Mammary epithelial cell (primary cell): ENCODE measurements at regions of chr7 and their contacts with region 1.

Region 1: DNA sequence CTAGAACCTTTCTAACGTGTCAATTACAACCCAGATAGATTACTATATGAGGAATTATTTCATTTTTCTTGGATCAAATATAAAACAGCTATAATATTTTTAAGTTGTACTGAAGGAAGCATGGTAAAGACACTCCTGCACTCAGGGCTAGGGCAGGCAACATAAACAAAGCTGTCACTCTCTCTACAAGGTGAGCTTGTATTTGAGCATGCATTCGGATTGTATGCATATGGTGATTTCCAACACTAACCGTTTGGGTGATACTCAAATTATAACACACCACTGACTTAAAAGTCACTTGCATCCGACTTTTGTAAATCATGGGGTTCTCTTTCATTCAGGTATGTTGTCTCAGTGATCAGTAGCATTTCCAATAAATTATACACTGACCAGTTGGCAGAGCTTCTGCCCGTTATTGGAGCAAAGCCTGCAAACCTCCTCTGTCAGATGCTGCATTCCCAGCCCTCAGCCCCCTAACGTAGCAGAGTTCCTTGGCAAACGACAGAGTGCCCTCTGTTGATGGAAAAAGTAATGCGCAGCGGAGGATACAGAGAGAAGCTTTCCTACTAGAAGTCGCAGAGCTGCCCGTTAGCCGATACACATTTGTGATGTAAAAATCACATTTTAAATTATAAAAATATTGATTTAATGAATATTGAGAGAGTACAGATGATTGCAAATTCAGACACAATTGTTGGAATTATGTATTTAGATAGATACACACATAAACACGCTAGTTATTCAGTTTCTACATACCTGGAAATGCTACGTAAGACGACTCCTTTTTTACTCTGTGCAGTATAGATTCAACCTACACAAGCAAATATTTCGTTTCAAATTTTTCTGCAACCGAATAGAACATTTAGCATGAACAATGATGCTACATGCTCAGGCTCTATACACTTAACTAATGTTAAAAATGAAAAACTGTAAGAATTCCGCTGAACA is 173.9 kb upstream of the SP4 start:
- DNase-seq: peak; percentile 52
- H3K4me3 ChIP-seq: no peak overlapping the region
- H3K27ac ChIP-seq: no peak overlapping the region
- H3K4me1 ChIP-seq: peaks cover 3% of the 10 kb centered on the region
- H3K27me3 ChIP-seq: no peaks in the 10 kb centered on the region
- CTCF ChIP-seq: peak; percentile 83 to 86

Region 2: DNA sequence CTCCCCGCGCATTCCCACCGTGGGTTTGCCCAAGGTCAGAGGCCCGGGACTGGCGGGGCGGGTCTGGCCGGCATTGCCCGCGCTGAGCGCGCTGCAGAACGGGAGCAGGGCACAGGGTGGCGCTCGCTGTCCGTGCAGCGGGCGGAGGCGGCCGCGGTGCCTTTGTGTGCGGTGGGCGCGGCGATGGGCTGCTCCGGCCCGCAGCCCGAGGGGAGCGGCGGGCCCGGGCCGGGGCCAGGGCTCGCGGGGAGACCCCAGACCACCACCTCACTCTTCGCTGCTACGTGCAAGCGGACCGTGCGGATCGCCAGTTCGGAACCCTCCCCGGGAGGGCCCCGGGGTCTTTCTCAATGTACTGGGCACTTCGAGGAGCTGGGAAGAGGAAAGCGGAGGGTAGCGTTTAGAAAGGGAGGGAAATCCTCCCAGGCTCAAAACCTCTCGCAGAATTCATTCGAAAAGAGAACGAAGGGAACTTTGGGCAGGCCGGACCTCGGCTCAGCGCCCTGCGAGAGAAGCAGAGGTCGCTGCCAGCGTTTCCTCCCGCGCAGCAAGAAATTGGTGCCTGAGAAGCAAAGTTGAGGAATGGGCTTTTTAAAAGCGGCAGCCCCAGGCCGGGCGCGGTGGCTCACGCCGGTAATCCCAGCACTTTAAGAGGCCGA is 475.8 kb before region 1 on chr7:
- CTCF ChIA-PET with region 1: no interaction called
- dilution Hi-C with region 1: no loop called
- in situ Hi-C with region 1: loop called (anchors 10 kb)
- intact Hi-C with region 1: loop called (anchors 1 kb)
- DNase-seq: peak; percentile 37
- H3K4me3 ChIP-seq: peak overlapping the region; percentile 52 to 77 (median 55)
- H3K27ac ChIP-seq: no peak overlapping the region
- H3K4me1 ChIP-seq: peaks cover 4% of the 10 kb centered on the region
- H3K27me3 ChIP-seq: peaks cover 17% of the 10 kb centered on the region
- CTCF ChIP-seq: peak; percentile 52 to 74

Region 3: DNA sequence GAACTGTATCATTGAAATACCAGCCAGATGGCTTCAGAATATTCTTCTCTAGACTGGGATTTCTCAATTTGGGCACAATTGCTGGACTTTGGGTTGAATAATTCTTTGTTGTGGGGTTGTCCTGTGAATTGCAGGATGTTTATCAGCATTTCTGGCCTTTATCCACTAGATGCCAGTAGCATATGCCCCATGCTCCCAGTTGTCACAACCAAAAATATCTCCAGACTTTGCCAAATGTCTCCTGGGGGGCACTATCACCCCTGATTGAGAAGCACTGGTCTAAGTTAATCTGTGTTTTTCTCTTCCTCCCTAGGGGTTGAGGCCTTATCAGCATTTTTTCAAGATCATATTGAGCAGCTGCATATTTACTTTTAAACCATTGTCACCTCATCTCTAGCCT is 262.5 kb before region 1 on chr7:
- CTCF ChIA-PET with region 1: no interaction called
- dilution Hi-C with region 1: no loop called
- in situ Hi-C with region 1: loop called (anchors 10 to 25 kb)
- intact Hi-C with region 1: loop called (anchors 1 kb)
- DNase-seq: peak; percentile 9
- H3K4me3 ChIP-seq: no peak overlapping the region
- H3K27ac ChIP-seq: no peak overlapping the region
- H3K4me1 ChIP-seq: no peaks in the 10 kb centered on the region
- H3K27me3 ChIP-seq: no peaks in the 10 kb centered on the region
- CTCF ChIP-seq: peak; percentile 37 to 67

Region 4: DNA sequence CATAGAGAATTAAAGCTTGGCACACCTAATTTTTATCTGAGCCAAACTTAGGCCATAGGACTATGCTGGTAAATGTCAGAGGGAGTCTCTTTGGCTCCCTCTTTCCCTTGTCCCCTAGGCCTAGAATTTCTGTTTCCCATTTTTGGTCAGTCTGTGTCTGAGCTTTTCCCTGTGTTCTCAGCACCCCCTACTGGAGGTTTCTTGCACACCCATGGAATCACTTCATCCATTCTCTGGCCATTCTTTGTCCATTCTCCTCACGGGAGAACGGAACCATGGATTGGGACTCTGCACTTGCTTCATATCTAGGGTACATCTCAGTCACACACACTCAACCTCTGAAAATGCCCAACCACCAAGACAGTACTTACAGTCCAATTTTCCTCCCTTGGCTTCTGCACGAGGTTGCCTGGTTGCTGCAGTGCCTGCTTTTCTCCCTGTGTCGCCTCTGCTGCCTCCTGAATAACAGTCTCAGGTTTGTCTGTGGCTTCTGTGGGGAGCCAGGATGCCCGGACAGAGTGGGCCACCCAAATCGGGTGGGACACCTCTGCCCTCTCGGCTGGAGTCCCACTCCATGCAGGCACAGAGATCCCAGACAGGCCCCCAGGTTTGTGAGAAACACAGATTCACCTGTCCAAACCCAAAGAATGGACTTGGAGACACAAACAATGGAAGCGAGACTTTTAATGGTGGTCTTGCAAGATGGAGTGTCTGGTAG is 253.8 kb after region 1 on chr7:
- CTCF ChIA-PET with region 1: interaction called, 3 read pairs
- dilution Hi-C with region 1: no loop called
- in situ Hi-C with region 1: loop called in 1 of 2 experiments (anchors 5 kb)
- intact Hi-C with region 1: loop called (anchors 1 kb)
- DNase-seq: peak; percentile 28
- H3K4me3 ChIP-seq: no peak overlapping the region
- H3K27ac ChIP-seq: no peak overlapping the region
- H3K4me1 ChIP-seq: no peaks in the 10 kb centered on the region
- H3K27me3 ChIP-seq: no peaks in the 10 kb centered on the region
- CTCF ChIP-seq: peak; percentile 68 to 86

Region 5: GRCh38 chr7:22488643-22489462 is 1234.8 kb after region 1 on chr7:
- CTCF ChIA-PET with region 1: no interaction called
- dilution Hi-C with region 1: no loop called
- in situ Hi-C with region 1: no loop called
- intact Hi-C with region 1: loop called (anchors 5 kb)
- DNase-seq: peak; percentile 54
- H3K4me3 ChIP-seq: no peak overlapping the region
- H3K27ac ChIP-seq: no peak overlapping the region
- H3K4me1 ChIP-seq: no peaks in the 10 kb centered on the region
- H3K27me3 ChIP-seq: no peaks in the 10 kb centered on the region
- CTCF ChIP-seq: peak; percentile 79 to 88